Left lung (tissue), 14 donors: ENCODE measurements at regions of chr16 and their contacts with region 1.

Region 1: GRCh38 chr16:67428146-67428731 is 2.7 kb upstream of the HSD11B2 start:
- DNase-seq: peak in 3 of 4 donors; percentile 65 to 85 (median 85)
- ATAC-seq: peak; percentile 77
- H3K4me3 ChIP-seq: no peak overlapping the region
- H3K27ac ChIP-seq: no peak overlapping the region
- H3K4me1 ChIP-seq: peaks cover 21 to 37% of the 10 kb centered on the region in 2 donors
- H3K27me3 ChIP-seq: peaks cover 13 to 58% of the 10 kb centered on the region in 2 donors
- CTCF ChIP-seq: peak; percentile 77 to 79

Region 2: DNA sequence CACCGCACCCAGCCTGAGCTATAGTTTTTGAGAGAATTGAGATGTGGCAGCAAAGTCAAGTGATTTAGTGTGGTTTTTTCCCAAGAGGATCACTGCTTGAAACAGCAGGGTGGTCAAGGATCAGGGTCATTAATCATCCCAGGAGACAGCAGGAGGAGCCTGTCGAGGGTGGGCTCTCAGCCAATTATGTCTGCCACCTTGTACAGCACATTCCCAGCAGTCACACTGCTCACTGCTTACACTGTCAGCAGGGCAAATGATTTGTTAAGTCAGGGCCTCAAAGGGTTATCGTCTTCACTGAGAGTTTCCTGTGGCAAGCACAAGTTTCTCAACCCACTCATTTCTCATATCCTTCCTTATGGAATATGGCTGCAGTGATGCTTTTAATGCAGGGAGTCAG is 290.6 kb before region 1 on chr16:
- intact Hi-C with region 1: no loop called
- DNase-seq: no peak
- ATAC-seq: no peak
- H3K4me3 ChIP-seq: no peak overlapping the region
- H3K27ac ChIP-seq: no peak overlapping the region
- H3K4me1 ChIP-seq: no peaks in the 10 kb centered on the region
- H3K27me3 ChIP-seq: no peaks in the 10 kb centered on the region
- CTCF ChIP-seq: no peak

Region 3: GRCh38 chr16:67301080-67301782 is 127.0 kb before region 1 on chr16:
- intact Hi-C with region 1: no loop called
- DNase-seq: peak in 1 of 4 donors; percentile 49
- ATAC-seq: peak; percentile 66
- H3K4me3 ChIP-seq: no peak overlapping the region
- H3K27ac ChIP-seq: peak overlapping the region in 1 of 2 donors; percentile 7
- H3K4me1 ChIP-seq: no peaks in the 10 kb centered on the region
- H3K27me3 ChIP-seq: no peaks in the 10 kb centered on the region
- CTCF ChIP-seq: no peak

Region 4: DNA sequence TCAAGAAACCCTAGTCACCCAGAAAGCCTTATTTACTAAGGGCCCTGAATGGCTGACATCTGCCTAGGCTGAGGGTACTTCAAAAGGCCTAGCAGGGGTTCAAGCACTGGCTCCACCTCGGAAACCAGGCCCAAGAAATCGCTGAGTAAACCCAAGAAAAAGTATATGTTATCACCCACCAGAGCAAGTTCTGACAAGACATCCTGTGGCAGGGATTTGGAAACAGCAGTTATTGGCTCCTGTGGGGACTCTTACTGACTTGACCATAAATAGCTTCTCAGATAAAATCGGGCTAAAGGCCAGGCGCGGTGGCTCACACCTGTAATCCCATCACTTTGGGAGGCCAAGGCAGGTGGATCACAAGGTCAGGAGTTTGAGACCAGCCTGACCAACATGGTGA is 40.5 kb after region 1 on chr16:
- intact Hi-C with region 1: loop called in 1 of 2 experiments (anchors 5 kb)
- DNase-seq: no peak
- ATAC-seq: peak; percentile 24
- H3K4me3 ChIP-seq: no peak overlapping the region
- H3K27ac ChIP-seq: peak overlapping the region in 1 of 2 donors; percentile 50
- H3K4me1 ChIP-seq: peaks cover 19 to 94% of the 10 kb centered on the region in 2 donors
- H3K27me3 ChIP-seq: no peaks in the 10 kb centered on the region
- CTCF ChIP-seq: no peak